HCT116 (cell line): ENCODE measurements at regions of chr11 and their contacts with region 1.

Region 1: DNA sequence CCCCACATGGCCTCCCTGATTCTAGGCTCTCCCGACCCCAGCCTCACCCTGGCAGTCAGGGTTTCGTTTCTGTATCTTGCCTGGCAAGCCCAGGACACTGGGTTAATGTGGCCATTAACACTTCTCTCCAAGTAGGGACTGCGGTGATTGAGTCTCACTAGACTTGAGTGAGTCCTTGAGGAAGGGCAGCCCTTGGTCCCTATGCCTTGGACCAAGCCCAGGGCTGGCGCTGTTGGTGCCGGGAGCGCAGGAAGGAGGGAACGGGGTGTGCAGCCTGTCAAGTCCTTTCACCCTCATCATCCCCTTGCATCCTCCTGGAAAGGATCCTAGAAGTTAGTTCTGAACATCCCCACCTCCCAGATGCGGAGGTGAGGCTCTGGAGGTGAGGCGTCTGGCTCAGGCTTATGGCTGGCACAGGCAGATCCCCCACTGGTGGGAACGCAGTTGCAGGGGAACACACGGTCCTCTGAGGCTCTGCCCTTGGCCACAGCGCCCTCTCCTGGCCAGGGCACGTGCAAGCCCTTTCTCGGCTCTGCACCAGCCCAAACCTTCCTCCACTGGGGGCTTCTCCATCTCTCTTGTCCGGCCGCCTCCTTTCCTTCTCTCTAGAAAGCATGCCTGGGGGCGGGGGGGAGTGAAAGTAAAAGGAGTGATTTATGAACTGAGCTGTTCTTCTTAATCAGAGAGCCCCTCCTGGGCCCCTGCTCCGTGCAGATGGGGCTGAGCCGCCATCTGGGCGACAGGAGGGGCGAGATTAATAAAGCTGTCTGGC is 56.7 kb downstream of the TP53I11 start:
- DNase-seq: peak; percentile 40
- ATAC-seq: peak; percentile 99
- H3K4me3 ChIP-seq: no peak overlapping the region
- H3K27ac ChIP-seq: no peak overlapping the region
- H3K4me1 ChIP-seq: no peaks in the 10 kb centered on the region
- H3K27me3 ChIP-seq: no peaks in the 10 kb centered on the region
- CTCF ChIP-seq: peak; percentile 88 to 95 (median 95)
- POLR2A ChIP-seq: no peak
- RAD21 ChIP-seq: peak; percentile 95

Region 2: DNA sequence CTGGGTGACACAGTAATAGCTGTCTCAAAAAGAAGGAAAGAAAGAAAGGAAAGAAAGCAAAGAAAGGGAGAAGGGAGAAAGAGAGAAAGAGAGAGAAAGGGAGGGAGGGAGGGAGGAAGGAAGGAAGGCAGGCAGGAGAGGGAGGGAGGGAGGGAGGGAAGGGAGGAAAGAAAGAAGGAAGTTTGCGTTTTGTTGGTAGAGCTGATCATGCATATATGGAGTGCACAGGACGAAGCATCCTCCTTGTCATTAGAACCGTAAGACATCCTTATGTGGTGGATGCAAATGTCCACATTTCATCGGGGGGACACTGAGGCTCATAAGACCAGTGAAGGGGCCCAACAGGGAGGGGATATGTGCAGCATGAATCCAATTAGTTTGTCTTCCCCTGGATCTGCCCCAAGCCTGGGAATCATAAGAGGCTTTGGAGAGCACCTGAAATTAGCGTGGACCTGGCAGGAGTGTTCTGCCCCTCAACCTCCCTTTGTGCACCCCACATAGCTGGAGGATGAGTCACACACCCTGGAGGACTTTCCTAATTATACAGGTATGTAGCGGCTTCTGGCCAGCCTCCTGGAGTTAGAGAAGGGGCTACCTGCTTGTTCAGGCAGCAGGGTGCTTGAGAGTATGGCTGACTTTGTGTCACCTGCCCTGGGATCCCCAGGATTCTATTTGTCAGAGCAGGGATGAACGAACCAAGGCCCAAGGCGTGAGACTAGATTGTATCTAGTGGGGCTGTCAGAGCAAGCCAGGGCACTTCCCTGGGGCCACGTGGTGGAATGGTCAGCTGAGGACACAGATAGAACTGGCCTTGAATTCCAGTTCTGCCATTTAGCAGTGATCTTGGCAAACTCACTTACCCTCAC is 448.3 kb before region 1 on chr11:
- CTCF ChIA-PET with region 1: no interaction called
- POLR2A ChIA-PET with region 1: no interaction called
- RAD21 ChIA-PET with region 1: no interaction called
- intact Hi-C with region 1: no loop called
- DNase-seq: no peak
- ATAC-seq: peak; percentile 85
- H3K4me3 ChIP-seq: no peak overlapping the region
- H3K27ac ChIP-seq: no peak overlapping the region
- H3K4me1 ChIP-seq: peaks cover 6 to 12% of the 10 kb centered on the region in 2 experiments
- H3K27me3 ChIP-seq: no peaks in the 10 kb centered on the region
- CTCF ChIP-seq: no peak
- POLR2A ChIP-seq: no peak
- RAD21 ChIP-seq: no peak

Region 3: DNA sequence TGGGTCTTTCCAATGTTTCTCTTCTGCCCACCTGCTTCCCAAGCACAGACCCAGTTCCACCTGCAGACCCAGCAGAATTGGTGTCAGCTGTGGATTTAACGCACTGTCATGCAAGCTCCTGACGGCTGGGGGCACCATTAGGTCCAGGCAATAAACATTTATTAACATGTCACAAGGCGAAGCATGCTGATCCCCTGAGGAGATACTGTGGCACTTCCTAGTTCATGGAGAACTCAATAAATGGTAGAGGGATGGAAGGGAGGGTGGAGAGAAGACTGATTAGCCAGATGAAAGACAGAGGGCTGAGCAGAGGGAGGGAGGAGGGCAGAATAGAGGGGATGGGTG is 235.6 kb before region 1 on chr11:
- CTCF ChIA-PET with region 1: no interaction called
- POLR2A ChIA-PET with region 1: no interaction called
- RAD21 ChIA-PET with region 1: no interaction called
- intact Hi-C with region 1: loop called (anchors 1 kb)
- DNase-seq: no peak
- ATAC-seq: peak; percentile 87
- H3K4me3 ChIP-seq: no peak overlapping the region
- H3K27ac ChIP-seq: no peak overlapping the region
- H3K4me1 ChIP-seq: no peaks in the 10 kb centered on the region
- H3K27me3 ChIP-seq: no peaks in the 10 kb centered on the region
- CTCF ChIP-seq: peak; percentile 55 to 62 (median 60); a peak in 5 of 6 replicates
- POLR2A ChIP-seq: no peak
- RAD21 ChIP-seq: peak; percentile 76

Region 4: DNA sequence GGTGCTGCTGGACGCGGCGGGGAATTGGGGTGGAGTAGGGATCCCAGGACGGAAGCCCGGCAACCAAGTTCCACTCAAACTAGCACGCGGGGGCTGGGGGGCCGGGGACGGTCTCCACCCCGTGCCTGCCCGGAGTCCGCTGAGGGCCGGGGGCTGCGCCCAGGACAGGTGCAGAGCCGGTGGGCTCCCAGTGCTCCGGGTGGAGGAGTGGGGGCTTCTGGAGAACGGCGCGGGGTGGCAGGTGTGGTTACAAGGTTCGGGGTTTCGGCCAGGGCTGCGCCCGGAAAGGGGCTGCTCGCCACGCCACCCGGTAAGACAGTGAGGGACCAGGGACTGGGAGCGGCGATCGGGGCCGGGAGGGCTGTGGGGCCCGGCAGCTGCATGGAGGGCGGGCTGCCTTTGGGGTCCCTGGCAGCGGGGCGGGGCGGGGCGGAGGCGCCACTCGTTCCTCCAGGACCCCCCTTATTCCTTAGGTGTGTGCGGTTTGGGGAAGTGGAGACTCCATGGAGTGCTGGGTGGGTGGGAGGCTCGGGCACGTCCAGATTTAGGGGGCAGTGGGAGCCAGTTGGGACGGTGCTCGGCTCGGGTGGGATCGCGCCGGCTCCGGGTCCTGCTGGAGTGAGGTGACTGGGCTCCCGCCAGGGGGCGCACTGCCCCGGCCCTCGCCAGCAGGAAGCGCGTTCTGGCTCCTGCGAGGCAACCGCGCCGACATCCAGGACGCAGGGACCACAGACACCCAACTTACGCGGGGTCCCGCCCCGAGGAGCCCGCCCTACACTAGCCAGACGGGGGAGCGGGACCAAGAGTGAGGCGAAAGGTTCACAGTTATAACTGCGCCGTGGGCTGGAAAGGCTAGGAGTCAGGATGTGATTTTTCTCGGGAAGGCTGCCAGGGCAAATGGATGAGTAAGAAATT is 166.4 kb before region 1 on chr11:
- CTCF ChIA-PET with region 1: no interaction called
- POLR2A ChIA-PET with region 1: no interaction called
- RAD21 ChIA-PET with region 1: no interaction called
- intact Hi-C with region 1: loop called (anchors 5 kb)
- DNase-seq: peak; percentile 57
- ATAC-seq: peak; percentile 93
- H3K4me3 ChIP-seq: peak overlapping the region; percentile 74 to 82
- H3K27ac ChIP-seq: peak overlapping the region; percentile 48; the same call in 1 of the 2 replicates
- H3K4me1 ChIP-seq: peaks cover 4 to 18% of the 10 kb centered on the region in 2 experiments; a peak in 3 of 4 replicates
- H3K27me3 ChIP-seq: no peaks in the 10 kb centered on the region
- CTCF ChIP-seq: peak; percentile 70 to 83 (median 76); a peak in 5 of 6 replicates
- POLR2A ChIP-seq: no peak
- RAD21 ChIP-seq: peak; percentile 77

Region 5: DNA sequence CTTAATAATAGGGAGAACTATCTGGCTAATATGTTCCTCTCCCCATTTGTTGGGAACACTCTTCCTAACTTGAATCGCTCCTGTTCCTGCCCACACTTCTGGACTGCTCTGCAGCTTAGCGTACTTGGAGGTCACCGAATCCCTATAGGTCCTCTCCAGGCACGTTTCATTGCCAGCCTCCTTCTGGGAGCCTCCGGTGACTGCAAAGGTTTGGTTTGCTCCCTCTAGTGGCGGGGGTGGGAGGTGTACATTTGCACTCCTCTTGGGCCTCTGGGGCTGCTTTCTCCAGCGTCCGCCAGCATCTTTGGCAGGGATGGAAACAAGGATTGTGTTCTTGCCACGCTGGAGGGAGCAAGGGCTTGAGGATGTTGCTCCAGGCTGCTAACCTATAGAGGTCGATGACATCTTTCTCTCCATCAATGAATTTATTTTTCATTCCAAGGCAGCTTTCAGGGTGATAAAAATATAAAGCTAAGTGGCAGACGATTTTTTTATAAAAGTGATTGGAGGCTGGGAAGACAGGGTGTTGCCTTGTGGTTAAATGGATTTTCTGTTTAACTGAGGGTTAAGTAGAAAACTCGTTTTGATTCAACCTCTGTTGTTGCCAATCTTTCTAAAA is 118.6 kb before region 1 on chr11:
- CTCF ChIA-PET with region 1: interaction called, 3 read pairs
- POLR2A ChIA-PET with region 1: no interaction called
- RAD21 ChIA-PET with region 1: no interaction called
- intact Hi-C with region 1: loop called (anchors 5 kb)
- DNase-seq: peak; percentile 69
- ATAC-seq: peak; percentile 99
- H3K4me3 ChIP-seq: no peak overlapping the region
- H3K27ac ChIP-seq: no peak overlapping the region
- H3K4me1 ChIP-seq: no peaks in the 10 kb centered on the region
- H3K27me3 ChIP-seq: no peaks in the 10 kb centered on the region
- CTCF ChIP-seq: peak; percentile 77 to 94 (median 88)
- POLR2A ChIP-seq: no peak
- RAD21 ChIP-seq: peak; percentile 63

Region 6: DNA sequence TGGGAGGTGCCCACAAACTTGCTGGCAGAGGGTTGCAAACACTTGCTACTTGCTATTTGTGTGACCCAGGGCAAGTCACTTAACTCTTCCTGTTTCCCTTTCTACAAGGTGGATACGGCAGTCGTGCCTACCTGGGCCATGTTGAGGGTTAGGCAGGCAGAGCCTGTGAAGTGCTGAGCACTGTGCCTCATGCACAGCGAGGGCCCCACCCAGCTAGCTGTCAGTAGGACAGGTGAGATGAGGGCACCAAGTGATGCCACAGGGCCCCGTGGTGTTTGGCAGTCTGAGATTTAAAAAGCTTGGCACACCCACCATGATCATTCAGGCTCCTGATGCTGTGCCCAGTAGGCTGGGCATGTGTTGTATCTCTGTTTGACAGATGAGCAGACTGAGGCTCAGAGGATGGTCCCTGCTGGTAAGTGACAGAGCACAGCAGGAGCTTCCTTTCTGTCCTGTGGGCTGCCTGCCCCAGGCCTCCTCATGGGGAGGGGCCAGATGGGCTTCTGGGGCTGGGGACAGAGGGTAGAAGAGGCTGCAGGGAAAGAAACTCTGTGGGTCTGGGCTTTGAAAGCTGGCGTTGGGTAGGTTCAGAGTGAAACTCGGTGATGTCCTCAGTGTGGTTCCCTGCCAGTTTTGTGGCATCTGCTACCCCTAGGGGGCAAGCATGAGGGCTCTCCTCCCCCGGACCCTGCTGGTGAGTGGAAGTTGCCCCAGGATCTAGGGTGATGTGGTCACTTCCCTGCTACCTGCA is 108.0 kb before region 1 on chr11:
- CTCF ChIA-PET with region 1: no interaction called
- POLR2A ChIA-PET with region 1: no interaction called
- RAD21 ChIA-PET with region 1: no interaction called
- intact Hi-C with region 1: no loop called
- DNase-seq: no peak
- ATAC-seq: peak; percentile 76; the same call in 1 of the 2 replicates
- H3K4me3 ChIP-seq: no peak overlapping the region
- H3K27ac ChIP-seq: no peak overlapping the region
- H3K4me1 ChIP-seq: no peaks in the 10 kb centered on the region
- H3K27me3 ChIP-seq: no peaks in the 10 kb centered on the region
- CTCF ChIP-seq: peak in 2 of 3 experiments; percentile 27 to 57; a peak in 3 of 6 replicates
- POLR2A ChIP-seq: no peak
- RAD21 ChIP-seq: no peak

Region 7: DNA sequence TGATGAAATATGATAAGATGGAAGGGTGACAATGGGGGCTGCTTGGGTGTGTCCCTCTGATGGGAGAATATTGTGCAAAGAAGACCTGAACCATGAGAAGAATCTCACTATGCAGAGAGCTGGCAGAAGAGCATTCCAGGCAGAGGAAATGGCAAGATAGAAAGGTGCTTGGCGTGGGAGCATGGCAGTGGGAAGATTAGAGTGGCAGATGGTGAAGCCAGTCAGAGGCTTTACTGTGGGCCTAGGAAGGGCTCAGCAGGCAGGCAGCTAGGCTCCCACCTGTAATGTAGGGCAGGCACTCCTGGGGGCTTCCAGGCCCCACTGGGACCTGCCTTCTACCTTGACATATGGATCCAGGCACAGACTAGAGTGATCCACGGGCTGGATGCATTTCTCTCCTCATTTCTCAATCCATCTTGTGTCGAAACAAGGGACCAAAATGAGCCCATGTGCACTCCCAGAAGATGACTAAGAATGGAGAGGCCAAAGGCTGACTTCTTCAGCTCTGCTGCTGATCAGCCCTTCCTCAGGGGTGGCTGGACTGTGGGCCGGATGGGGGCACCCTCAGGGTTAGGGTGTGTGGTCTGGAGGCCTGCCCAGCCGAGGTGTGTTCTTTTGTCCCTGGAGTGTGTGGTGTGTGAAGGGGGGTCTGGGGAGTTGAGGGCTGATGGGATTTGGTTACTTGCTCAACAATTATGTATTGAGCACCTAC is 79.0 kb before region 1 on chr11:
- CTCF ChIA-PET with region 1: no interaction called
- POLR2A ChIA-PET with region 1: no interaction called
- RAD21 ChIA-PET with region 1: no interaction called
- intact Hi-C with region 1: no loop called
- DNase-seq: no peak
- ATAC-seq: no peak
- H3K4me3 ChIP-seq: no peak overlapping the region
- H3K27ac ChIP-seq: no peak overlapping the region
- H3K4me1 ChIP-seq: no peaks in the 10 kb centered on the region
- H3K27me3 ChIP-seq: no peaks in the 10 kb centered on the region
- CTCF ChIP-seq: no peak
- POLR2A ChIP-seq: no peak
- RAD21 ChIP-seq: no peak

Region 8: GRCh38 chr11:44883277-44883676 is 10.8 kb before region 1 on chr11:
- CTCF ChIA-PET with region 1: no interaction called
- POLR2A ChIA-PET with region 1: no interaction called
- RAD21 ChIA-PET with region 1: no interaction called
- intact Hi-C with region 1: no loop called
- DNase-seq: peak; percentile 16
- ATAC-seq: peak; percentile 65
- H3K4me3 ChIP-seq: no peak overlapping the region
- H3K27ac ChIP-seq: no peak overlapping the region
- H3K4me1 ChIP-seq: peaks cover 0 to 14% of the 10 kb centered on the region in 2 experiments; a peak in 2 of 4 replicates
- H3K27me3 ChIP-seq: no peaks in the 10 kb centered on the region
- CTCF ChIP-seq: no peak
- POLR2A ChIP-seq: no peak
- RAD21 ChIP-seq: no peak